Activated CD4-positive, alpha-beta T cell treated with anti-CD3 and anti-CD28 coated beads for 36 hours (primary cell): ENCODE measurements at regions of chr3 and their contacts with region 1.

Region 1: GRCh38 chr3:45656575-45657363 is 32.4 kb upstream of the SACM1L start:
- DNase-seq: peak; percentile 94
- ATAC-seq: peak; percentile 93
- H3K4me3 Mint-ChIP-seq: no peak overlapping the region
- H3K27ac Mint-ChIP-seq: no peak overlapping the region
- H3K4me1 Mint-ChIP-seq: peaks cover 16% of the 10 kb centered on the region
- H3K27me3 Mint-ChIP-seq: no peaks in the 10 kb centered on the region

Region 2: GRCh38 chr3:45224824-45225464 is 431.8 kb before region 1 on chr3:
- CTCF ChIA-PET with region 1: no interaction called
- POLR2A ChIA-PET with region 1: no interaction called
- intact Hi-C with region 1: loop called in 1 of 2 experiments (anchors 5 kb)
- DNase-seq: peak; percentile 60
- ATAC-seq: no peak
- H3K4me3 Mint-ChIP-seq: peak overlapping the region; percentile 73
- H3K27ac Mint-ChIP-seq: no peak overlapping the region
- H3K4me1 Mint-ChIP-seq: peaks cover 13% of the 10 kb centered on the region
- H3K27me3 Mint-ChIP-seq: peaks cover 62% of the 10 kb centered on the region

Region 3: DNA sequence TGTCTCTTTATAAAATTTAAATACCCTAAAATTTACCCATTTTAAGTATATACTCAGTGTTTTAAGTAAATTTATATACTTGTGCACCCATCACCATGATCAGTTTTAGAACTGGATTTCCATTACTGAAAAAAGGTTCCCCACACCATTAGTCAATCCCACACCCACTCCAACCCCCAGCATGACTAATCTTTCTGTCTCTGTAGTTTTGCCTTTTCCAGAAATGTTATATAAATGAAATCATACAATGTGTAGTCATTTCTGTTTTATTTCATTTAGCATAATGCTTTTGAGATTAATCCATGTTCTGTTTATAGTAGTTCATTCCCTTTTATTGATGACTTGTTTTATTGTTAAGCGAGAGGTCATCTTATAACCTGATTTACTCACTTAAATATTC is 128.3 kb before region 1 on chr3:
- CTCF ChIA-PET with region 1: interaction called, 5 read pairs
- POLR2A ChIA-PET with region 1: no interaction called
- intact Hi-C with region 1: loop called in 1 of 2 experiments (anchors 5 kb)
- DNase-seq: peak; percentile 66
- ATAC-seq: peak; percentile 76
- H3K4me3 Mint-ChIP-seq: no peak overlapping the region
- H3K27ac Mint-ChIP-seq: no peak overlapping the region
- H3K4me1 Mint-ChIP-seq: peaks cover 15% of the 10 kb centered on the region
- H3K27me3 Mint-ChIP-seq: no peaks in the 10 kb centered on the region

Region 4: GRCh38 chr3:45593708-45594609 is 62.8 kb before region 1 on chr3:
- CTCF ChIA-PET with region 1: interaction called, 14 read pairs
- POLR2A ChIA-PET with region 1: no interaction called
- intact Hi-C with region 1: loop called (anchors 1 to 2 kb)
- DNase-seq: peak; percentile 82
- ATAC-seq: peak; percentile 81
- H3K4me3 Mint-ChIP-seq: peak overlapping the region; percentile 86
- H3K27ac Mint-ChIP-seq: peak overlapping the region; percentile 82
- H3K4me1 Mint-ChIP-seq: peaks cover 46% of the 10 kb centered on the region
- H3K27me3 Mint-ChIP-seq: no peaks in the 10 kb centered on the region

Region 5: DNA sequence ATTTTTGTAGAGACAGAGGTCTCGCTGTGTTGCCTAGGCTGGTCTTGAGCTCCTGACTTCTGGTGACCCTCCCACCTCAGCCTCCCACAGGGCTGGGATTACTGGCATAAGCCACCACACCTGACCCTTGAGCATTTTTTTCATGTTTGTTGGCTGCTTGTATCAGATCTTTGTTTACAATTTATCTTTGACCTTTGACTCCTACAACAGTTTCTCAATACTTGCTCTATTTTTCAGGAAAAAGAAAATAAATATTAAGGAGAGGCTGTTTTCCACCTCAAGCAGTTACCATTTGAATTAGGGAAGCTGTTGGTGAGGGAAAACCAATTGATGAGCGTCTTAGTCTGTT is 17.8 kb before region 1 on chr3:
- CTCF ChIA-PET with region 1: interaction called, 12 read pairs
- POLR2A ChIA-PET with region 1: no interaction called
- intact Hi-C with region 1: no loop called
- DNase-seq: no peak
- ATAC-seq: no peak
- H3K4me3 Mint-ChIP-seq: no peak overlapping the region
- H3K27ac Mint-ChIP-seq: no peak overlapping the region
- H3K4me1 Mint-ChIP-seq: peaks cover 9% of the 10 kb centered on the region
- H3K27me3 Mint-ChIP-seq: no peaks in the 10 kb centered on the region

Region 6: GRCh38 chr3:45677033-45677433 is 20.3 kb after region 1 on chr3:
- CTCF ChIA-PET with region 1: interaction called, 19 read pairs
- POLR2A ChIA-PET with region 1: no interaction called
- intact Hi-C with region 1: no loop called
- DNase-seq: peak; percentile 71
- ATAC-seq: peak; percentile 94
- H3K4me3 Mint-ChIP-seq: peak overlapping the region; percentile 53
- H3K27ac Mint-ChIP-seq: peak overlapping the region; percentile 93
- H3K4me1 Mint-ChIP-seq: peaks cover 20% of the 10 kb centered on the region
- H3K27me3 Mint-ChIP-seq: no peaks in the 10 kb centered on the region

Region 7: DNA sequence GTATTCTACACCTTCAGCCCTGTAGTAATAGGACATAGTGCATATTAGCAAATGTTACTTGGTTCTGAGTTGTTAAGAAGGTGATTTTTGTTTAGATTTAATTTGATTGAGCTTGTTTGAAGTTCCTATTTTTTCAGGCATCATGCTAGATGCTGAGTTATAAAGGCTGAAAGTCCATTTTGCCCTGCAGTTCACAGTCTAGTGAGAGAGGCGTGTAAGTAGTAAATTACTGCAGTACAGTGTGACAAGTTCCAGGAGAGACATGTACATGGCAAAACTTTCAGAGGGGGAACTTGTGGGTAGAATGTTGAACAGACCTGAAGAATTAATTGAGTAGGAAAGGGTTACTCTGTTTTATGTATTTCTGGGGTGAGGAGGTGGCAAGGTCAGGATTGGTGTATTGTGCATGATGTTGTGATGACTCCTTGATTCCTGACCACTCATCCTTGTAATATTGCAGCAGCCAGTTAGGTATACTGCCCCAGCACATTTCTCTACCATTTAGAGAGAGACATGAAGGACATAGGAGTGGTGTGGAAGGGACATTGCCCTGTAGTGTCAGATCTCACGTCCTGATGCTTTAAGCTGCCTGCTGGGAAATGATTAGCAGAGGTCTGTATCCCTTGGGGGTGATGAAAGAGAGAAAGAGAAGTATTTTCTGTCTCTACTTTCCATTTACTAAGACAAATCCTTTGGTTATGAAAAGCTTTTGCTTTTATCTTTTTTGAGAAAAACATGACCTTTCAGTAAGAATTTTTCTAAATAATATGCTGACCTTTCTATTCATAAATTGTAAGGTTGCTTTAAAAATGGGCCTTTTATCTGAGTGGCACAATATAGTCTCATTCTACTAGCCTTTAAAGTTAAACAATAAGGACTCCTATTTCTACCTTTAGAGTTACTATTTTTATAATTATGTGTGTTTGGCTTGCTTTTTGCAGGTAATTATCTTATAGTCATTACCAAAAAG is 49.4 kb after region 1 on chr3:
- CTCF ChIA-PET with region 1: interaction called, 18 read pairs
- POLR2A ChIA-PET with region 1: no interaction called
- intact Hi-C with region 1: no loop called
- DNase-seq: no peak
- ATAC-seq: peak; percentile 82
- H3K4me3 Mint-ChIP-seq: no peak overlapping the region
- H3K27ac Mint-ChIP-seq: peak overlapping the region; percentile 13
- H3K4me1 Mint-ChIP-seq: peaks cover 31% of the 10 kb centered on the region
- H3K27me3 Mint-ChIP-seq: no peaks in the 10 kb centered on the region

Region 8: DNA sequence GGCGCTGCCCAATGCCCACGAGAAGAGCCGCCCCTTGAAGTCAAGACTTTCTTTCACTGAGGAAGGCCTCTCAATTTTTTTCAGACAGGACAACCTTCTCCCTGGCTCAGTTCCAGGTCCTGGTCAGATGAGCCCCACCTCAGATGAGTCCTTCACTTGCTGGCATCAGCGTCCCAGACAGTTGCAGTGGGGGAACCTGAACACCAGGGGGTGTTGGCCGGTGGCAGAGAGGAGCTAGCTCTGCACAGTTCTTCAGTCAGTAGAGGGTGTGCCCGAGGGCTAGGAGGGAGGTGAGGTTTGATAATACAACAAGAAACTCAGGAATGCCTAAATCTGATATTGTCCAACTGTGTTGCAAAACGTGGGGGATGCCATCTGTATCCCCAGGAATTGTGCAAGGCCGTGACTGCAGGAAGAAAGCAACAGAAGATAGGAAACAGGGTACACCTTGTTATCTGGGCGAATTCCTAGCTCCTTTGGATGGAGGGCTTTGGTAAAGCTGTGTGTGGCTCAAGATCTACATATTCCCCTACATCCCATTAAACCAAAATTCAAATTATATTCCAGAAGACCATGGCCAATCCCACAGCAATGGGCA is 619.8 kb after region 1 on chr3:
- CTCF ChIA-PET with region 1: no interaction called
- POLR2A ChIA-PET with region 1: no interaction called
- intact Hi-C with region 1: no loop called
- DNase-seq: peak; percentile 86
- ATAC-seq: peak; percentile 81
- H3K4me3 Mint-ChIP-seq: no peak overlapping the region
- H3K27ac Mint-ChIP-seq: no peak overlapping the region
- H3K4me1 Mint-ChIP-seq: peaks cover 33% of the 10 kb centered on the region
- H3K27me3 Mint-ChIP-seq: peaks cover 31% of the 10 kb centered on the region

Region 9: DNA sequence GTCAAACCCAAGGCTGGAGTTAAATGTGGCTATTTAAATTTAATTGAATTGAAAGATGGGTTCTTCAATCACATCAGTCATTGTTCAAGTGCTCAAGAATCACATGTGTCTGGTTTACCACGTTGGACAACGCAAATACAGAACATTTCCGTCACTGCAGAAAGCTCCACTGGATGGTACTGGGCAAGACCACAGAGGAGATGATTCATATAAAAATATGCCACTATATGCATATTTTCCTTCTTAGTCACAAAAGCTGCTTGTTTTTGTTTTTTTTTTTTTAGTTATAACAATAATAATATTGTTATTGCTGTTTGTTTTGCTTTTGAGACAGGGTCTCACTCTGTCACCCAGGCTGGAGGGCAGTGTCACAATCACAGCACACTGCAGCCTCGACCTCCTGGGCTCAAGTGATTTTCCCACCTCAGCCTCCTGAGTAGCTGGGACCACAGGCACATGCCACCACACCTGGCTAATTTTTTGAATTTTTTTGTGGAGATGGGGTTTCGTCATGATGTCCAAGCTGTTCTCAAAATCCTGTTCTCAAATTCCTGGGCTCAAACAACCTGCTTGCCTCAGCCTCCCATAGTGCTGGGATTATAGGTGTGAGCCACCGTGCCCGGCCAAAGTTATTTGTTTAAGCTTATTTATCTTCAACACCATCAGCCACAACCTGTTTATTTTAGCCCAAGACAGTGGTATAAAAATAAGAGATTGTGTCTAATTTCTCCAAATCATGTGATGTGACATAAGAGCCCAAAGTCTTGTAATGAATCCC is 860.4 kb after region 1 on chr3:
- CTCF ChIA-PET with region 1: no interaction called
- POLR2A ChIA-PET with region 1: no interaction called
- intact Hi-C with region 1: no loop called
- DNase-seq: no peak
- ATAC-seq: no peak
- H3K4me3 Mint-ChIP-seq: no peak overlapping the region
- H3K27ac Mint-ChIP-seq: no peak overlapping the region
- H3K4me1 Mint-ChIP-seq: peaks cover 2% of the 10 kb centered on the region
- H3K27me3 Mint-ChIP-seq: peaks cover 2% of the 10 kb centered on the region